ENCODE measurements at regions of chr1 and their contacts with region 1.

Region 1: DNA sequence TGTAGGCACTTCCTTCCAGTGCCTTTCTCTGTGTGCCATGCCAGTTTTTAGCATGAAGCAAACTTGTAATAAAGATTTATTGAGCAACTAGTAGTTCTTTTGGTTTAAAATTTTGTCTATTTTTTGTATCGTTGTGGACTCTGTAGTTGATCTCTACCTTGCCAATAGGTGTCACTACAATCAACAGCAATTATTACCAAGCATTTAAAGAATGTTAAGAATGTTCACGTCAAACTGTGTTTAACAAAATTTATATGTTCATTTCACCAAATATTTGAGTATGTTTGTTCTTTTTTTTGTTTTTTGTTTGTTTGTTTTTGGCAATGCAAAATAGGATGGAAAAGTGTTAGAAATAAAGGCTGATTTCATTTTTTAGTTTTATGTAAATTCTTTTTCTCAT is 208.1 kb downstream of the PATJ start:
- DNase-seq: peak; percentile 63
- ATAC-seq: peak; percentile 64
- H3K4me3 ChIP-seq: no peak overlapping the region
- H3K27ac ChIP-seq: no peak overlapping the region
- H3K4me1 ChIP-seq: 0 out of 2 replicates have a peak, but pooled peaks cover 14% of the 10 kb centered on the region
- H3K27me3 ChIP-seq: no peaks in the 10 kb centered on the region
- CTCF ChIP-seq: peak; percentile 76

Region 2: DNA sequence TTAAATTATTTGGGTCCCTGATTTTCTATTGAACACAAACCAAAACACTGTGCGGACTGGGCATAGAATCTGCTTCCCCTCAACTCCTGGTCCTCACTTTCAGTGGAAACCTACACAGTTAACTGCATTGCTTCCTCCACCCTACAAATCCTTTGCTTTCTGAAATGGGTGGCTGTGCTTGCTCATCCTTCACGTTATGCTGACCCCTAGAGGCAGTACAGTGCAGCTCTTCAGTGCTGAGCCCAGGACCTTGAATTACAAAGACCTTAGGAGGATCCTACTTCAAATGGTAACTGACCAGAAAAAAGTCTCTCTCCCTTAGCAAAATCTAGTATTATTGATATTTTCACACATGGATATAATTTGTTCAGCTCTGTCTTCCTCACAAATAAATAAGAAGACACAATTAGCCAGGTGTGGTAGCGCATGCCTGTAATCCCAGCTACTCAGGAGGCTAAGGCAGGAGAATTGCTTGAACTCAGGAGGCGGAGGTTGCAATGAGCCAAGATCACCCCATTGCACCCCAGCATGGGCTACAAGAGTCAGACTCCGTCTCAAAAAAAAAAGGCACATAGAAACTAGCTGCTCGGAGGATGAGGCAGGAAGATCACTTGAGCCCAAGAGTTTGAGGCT is 180.8 kb after region 1 on chr1:
- CTCF ChIA-PET with region 1: interaction called, 3 read pairs
- POLR2A ChIA-PET with region 1: no interaction called
- intact Hi-C with region 1: loop called (anchors 1 kb)
- DNase-seq: peak; percentile 77
- ATAC-seq: peak; percentile 99
- H3K4me3 ChIP-seq: no peak overlapping the region
- H3K27ac ChIP-seq: no peak overlapping the region
- H3K4me1 ChIP-seq: no peaks in the 10 kb centered on the region
- H3K27me3 ChIP-seq: no peaks in the 10 kb centered on the region
- CTCF ChIP-seq: peak; percentile 92